ENCODE measurements at regions of chr17 and their contacts with region 1.

Region 1: GRCh38 chr17:32006957-32007462 is at the start of gene LRRC37B:
- DNase-seq: peak; percentile 83 to 92 (median 86)
- ATAC-seq: peak; percentile 97
- H3K4me3 ChIP-seq: peak within 1 kb of the TSS; percentile 94
- H3K27ac ChIP-seq: peak within 1 kb of the TSS; percentile 86
- H3K4me1 ChIP-seq: peaks cover 7 to 18% of the 10 kb centered on the region in 2 experiments; a peak in 4 of 5 replicates
- H3K27me3 ChIP-seq: no peaks in the 10 kb centered on the region
- CTCF ChIP-seq: peak; percentile 87 to 92 (median 89)
- EP300 ChIP-seq: no peak
- POLR2A ChIP-seq: 0 out of 2 replicates have a peak, but pooled peaks have one; percentile 26
- RAD21 ChIP-seq: peak; percentile 19 to 50; a peak in 2 of 4 replicates
- polyA plus RNA-seq, gene LRRC37B: 2.7 to 3.8 TPM

Region 2: GRCh38 chr17:31997005-31997404 is 10.0 kb before region 1 on chr17:
- CTCF ChIA-PET with region 1: no interaction called
- POLR2A ChIA-PET with region 1: interaction called, 11 read pairs
- in situ Hi-C with region 1: no loop called
- intact Hi-C with region 1: no loop called
- DNase-seq: no peak
- ATAC-seq: no peak
- H3K4me3 ChIP-seq: no peak overlapping the region
- H3K27ac ChIP-seq: no peak overlapping the region
- H3K4me1 ChIP-seq: no peaks in the 10 kb centered on the region
- H3K27me3 ChIP-seq: no peaks in the 10 kb centered on the region
- CTCF ChIP-seq: no peak
- EP300 ChIP-seq: no peak
- POLR2A ChIP-seq: no peak
- RAD21 ChIP-seq: no peak

Region 3: GRCh38 chr17:32127158-32127897 is 120.3 kb after region 1 on chr17:
- CTCF ChIA-PET with region 1: interaction called, 3 read pairs
- POLR2A ChIA-PET with region 1: interaction called, 8 read pairs
- in situ Hi-C with region 1: loop called (anchors 5 kb)
- intact Hi-C with region 1: no loop called
- DNase-seq: peak; percentile 73 to 80 (median 74)
- ATAC-seq: peak; percentile 95
- H3K4me3 ChIP-seq: peak overlapping the region; percentile 57
- H3K27ac ChIP-seq: peak overlapping the region; percentile 57
- H3K4me1 ChIP-seq: peaks cover 14 to 15% of the 10 kb centered on the region in 2 experiments; a peak in 4 of 5 replicates
- H3K27me3 ChIP-seq: no peaks in the 10 kb centered on the region
- CTCF ChIP-seq: no peak
- EP300 ChIP-seq: no peak
- POLR2A ChIP-seq: peak; percentile 70
- RAD21 ChIP-seq: no peak

Region 4: GRCh38 chr17:32142038-32142856 is 135.2 kb after region 1 on chr17 and contains the start of gene RHOT1:
- CTCF ChIA-PET with region 1: no interaction called
- POLR2A ChIA-PET with region 1: no interaction called
- in situ Hi-C with region 1: no loop called
- intact Hi-C with region 1: no loop called
- DNase-seq: peak; percentile 65 to 83 (median 68)
- ATAC-seq: peak; percentile 69
- H3K4me3 ChIP-seq: peak within 1 kb of the TSS; percentile 86
- H3K27ac ChIP-seq: peak within 1 kb of the TSS; percentile 94
- H3K4me1 ChIP-seq: peaks cover 6 to 9% of the 10 kb centered on the region in 2 experiments; a peak in 4 of 5 replicates
- H3K27me3 ChIP-seq: no peaks in the 10 kb centered on the region
- CTCF ChIP-seq: peak; percentile 65 to 69 (median 67); a peak in 4 of 6 replicates
- EP300 ChIP-seq: no peak
- POLR2A ChIP-seq: peak; percentile 52; the same call in 1 of the 2 replicates
- RAD21 ChIP-seq: no peak
- polyA plus RNA-seq, gene RHOT1: 23.0 to 30.5 TPM